Activated T-helper 1 cell treated with anti-CD3 and anti-CD28 coated beads, Interleukin-12 subunit alpha, Interleukin-12 subunit beta, Interleukin-2, Interleukin-4 antibody, amounts not matched to agents 30 ng/mL and 10 ng/mL and 1 ng/mL, durations not matched to agents 14 hours and 24 hours and 36 hours (primary cell): ENCODE measurements at regions of chr16 and their contacts with region 1.

Region 1: GRCh38 chr16:80084685-80085084 is 456.1 kb upstream of the DYNLRB2 start:
- DNase-seq: no peak
- H3K4me3 Mint-ChIP-seq: no peak overlapping the region
- H3K27ac Mint-ChIP-seq: no peak overlapping the region
- H3K4me1 Mint-ChIP-seq: no peaks in the 10 kb centered on the region
- H3K27me3 Mint-ChIP-seq: peaks cover 11% of the 10 kb centered on the region

Region 2: DNA sequence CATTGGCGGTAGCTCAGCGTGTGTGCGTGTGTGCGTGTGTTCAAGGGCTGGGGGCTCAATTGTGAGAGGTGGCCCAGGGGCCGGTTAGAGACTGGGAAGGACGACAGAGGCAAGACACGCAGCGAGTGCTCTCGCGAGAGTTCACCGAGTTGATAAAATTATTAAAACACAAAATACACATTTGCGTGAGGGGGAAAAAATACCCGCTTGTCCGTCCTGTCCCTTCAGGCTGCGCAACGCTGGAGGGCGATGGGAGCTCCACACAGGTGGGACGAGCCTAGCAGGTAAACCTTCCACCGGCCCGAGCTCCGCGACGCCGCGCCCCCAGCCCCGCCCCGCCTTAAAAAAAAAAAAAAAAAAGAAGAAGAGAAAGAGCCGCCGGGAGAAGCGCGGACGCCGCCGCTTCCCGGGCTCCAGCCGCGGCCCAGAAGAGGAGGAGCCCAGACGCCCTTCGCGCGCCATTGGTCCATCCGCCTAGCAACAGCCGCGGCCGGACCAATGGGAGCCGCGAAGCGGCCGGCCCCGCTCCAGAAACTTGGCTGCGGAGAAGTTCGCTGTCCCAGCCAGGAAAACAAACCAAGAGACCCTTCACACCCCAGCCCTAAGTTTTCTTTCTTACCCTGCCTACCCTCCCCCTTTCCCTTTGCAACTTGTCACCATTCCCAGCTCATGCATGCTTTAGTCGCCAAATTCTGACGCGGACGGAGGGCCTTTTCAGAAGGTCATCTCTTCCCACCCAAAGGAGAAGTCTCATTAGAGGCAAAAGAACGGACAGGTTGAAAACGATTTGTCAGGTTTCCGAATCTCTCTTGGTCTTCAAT is 314.2 kb before region 1 on chr16:
- intact Hi-C with region 1: loop called (anchors 10 kb)
- DNase-seq: peak; percentile 71
- H3K4me3 Mint-ChIP-seq: peak overlapping the region; percentile 86
- H3K27ac Mint-ChIP-seq: peak overlapping the region; percentile 84
- H3K4me1 Mint-ChIP-seq: peaks cover 36% of the 10 kb centered on the region
- H3K27me3 Mint-ChIP-seq: no peaks in the 10 kb centered on the region

Region 3: GRCh38 chr16:80174418-80174817 is 89.7 kb after region 1 on chr16:
- intact Hi-C with region 1: no loop called
- DNase-seq: no peak
- H3K4me3 Mint-ChIP-seq: no peak overlapping the region
- H3K27ac Mint-ChIP-seq: no peak overlapping the region
- H3K4me1 Mint-ChIP-seq: no peaks in the 10 kb centered on the region
- H3K27me3 Mint-ChIP-seq: peaks cover 4% of the 10 kb centered on the region